Naive thymus-derived CD4-positive, alpha-beta T cell (primary cell): ENCODE measurements at regions of chr9 and their contacts with region 1.

Region 1: DNA sequence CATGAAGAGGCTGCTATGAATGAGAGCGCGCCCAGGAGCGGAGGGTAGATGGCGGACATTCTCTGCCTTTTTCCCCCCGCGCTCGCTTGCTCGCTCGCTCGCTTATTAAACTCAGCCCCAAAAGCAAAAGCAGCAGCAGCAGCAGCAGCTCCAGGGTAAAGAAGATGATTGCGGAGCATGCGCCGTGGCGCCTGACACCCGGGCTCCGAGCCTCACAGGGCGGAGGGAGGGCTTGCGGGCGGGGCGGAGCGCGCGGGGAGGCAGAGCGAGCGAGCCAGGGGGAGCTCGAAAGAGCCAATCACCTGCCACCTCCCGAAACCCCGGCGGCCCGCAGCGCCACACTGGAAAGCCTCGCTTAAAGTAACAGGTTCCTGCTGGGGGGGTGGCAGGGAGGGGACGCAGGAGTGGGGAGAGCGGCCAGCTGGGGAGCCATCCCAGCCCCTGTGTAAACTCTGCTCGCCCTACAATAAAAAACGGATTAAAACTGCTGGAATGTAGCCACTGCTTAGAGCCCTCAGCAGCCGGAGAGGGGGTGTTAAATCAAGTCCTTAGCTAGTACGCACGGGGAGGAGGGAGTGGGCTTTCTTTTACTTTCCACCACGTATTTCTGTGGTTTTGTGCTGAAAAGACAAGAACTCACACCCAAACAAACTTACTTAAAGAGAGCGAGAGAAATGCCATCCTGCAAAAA is at the start of gene MLLT3:
- DNase-seq: peak; percentile 91 to 98 (median 98)
- ATAC-seq: peak; percentile 88
- H3K4me3 ChIP-seq: peak within 1 kb of the TSS; percentile 84
- H3K4me3 Mint-ChIP-seq: peak within 1 kb of the TSS; percentile 92 to 100 (median 98)
- H3K27ac ChIP-seq: peak within 1 kb of the TSS; percentile 89
- H3K27ac Mint-ChIP-seq: peak within 1 kb of the TSS; percentile 89 to 100 (median 99)
- H3K4me1 ChIP-seq: peaks cover 21 to 40% of the 10 kb centered on the region in 2 donors
- H3K4me1 Mint-ChIP-seq: peaks cover 30 to 48% (median 45%) of the 10 kb centered on the region in 7 donors
- H3K27me3 ChIP-seq: no peaks in the 10 kb centered on the region
- H3K27me3 Mint-ChIP-seq: no peaks in the 10 kb centered on the region
- total RNA-seq, gene MLLT3: 40.9 to 85.3 (median 71.3) TPM

Region 2: GRCh38 chr9:19769208-19769607 is 853.3 kb before region 1 on chr9:
- CTCF ChIA-PET with region 1: no interaction called
- POLR2A ChIA-PET with region 1: no interaction called
- intact Hi-C with region 1: no loop called
- DNase-seq: no peak
- ATAC-seq: no peak
- H3K4me3 ChIP-seq: no peak overlapping the region
- H3K4me3 Mint-ChIP-seq: no peak overlapping the region
- H3K27ac ChIP-seq: no peak overlapping the region
- H3K27ac Mint-ChIP-seq: no peak overlapping the region
- H3K4me1 ChIP-seq: no peaks in the 10 kb centered on the region
- H3K4me1 Mint-ChIP-seq: no peaks in the 10 kb centered on the region
- H3K27me3 ChIP-seq: peaks cover 0 to 4% of the 10 kb centered on the region in 2 donors
- H3K27me3 Mint-ChIP-seq: peaks cover 4 to 22% (median 20%) of the 10 kb centered on the region in 5 donors

Region 3: DNA sequence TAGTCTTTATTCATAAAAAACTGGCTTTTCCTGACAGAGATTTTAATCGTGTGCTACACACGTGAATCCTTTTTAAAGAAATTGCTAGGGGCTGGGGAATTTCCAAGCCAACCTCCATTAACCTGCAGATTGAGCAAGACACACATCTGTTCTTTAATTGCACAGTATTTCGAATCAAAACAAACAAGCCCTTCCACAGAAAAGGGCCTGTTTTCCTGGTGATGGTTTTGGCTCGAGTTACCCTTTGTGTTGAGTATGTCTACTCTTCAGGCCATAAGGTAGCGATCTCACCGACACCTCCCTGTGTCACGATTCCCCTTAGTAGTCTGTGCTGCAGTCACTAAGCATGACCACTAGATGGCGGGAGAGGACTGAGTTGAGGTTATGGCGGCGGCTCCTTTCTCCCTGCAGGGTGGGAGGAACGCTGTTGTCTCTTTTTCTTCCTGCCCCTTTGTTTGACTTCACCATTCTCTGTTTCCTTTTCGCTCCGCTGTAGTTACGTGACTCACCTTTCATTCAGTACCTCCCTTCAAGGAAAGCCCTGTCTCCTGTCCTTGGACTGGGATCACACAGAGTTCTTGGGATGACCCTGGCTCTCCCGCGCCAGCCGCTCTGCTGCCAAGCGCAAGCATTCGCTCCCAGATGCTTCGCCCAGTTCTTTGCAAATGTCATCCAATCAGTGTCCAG is 696.5 kb before region 1 on chr9:
- CTCF ChIA-PET with region 1: interaction called, 4 read pairs
- POLR2A ChIA-PET with region 1: no interaction called
- intact Hi-C with region 1: loop called (anchors 1 kb)
- DNase-seq: peak; percentile 54 to 87 (median 82)
- ATAC-seq: peak; percentile 99
- H3K4me3 ChIP-seq: peak overlapping the region; percentile 42
- H3K4me3 Mint-ChIP-seq: peak overlapping the region; percentile 69 to 84 (median 79)
- H3K27ac ChIP-seq: no peak overlapping the region
- H3K27ac Mint-ChIP-seq: peak overlapping the region in 7 of 9 donors; percentile 23 to 53 (median 35)
- H3K4me1 ChIP-seq: peaks cover 0 to 7% of the 10 kb centered on the region in 2 donors
- H3K4me1 Mint-ChIP-seq: peaks cover 0 to 39% (median 8%) of the 10 kb centered on the region in 7 donors
- H3K27me3 ChIP-seq: no peaks in the 10 kb centered on the region
- H3K27me3 Mint-ChIP-seq: peaks cover 0 to 14% (median 3%) of the 10 kb centered on the region in 5 donors

Region 4: DNA sequence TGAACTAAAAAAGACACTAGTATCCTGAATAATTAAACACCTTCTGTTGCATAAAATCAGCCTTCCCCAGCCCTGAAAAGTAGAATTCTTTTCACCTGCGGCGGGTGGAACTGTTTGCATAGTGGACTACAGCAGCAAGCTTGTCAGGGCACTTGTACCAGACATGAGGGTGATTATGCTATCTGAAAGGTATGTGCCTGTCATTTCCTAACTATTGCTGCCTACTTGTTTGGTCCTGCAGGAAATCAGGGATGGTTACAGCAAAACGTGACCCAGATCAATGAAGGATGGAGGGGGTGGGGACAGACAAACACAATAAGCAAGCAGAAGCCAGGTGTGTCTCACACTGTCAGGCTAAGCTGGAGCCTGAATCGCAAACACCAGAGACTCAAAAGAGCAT is 385.8 kb before region 1 on chr9:
- CTCF ChIA-PET with region 1: no interaction called
- POLR2A ChIA-PET with region 1: interaction called, 3 read pairs
- intact Hi-C with region 1: loop called in 1 of 2 experiments (anchors 5 kb)
- DNase-seq: no peak
- ATAC-seq: no peak
- H3K4me3 ChIP-seq: no peak overlapping the region
- H3K4me3 Mint-ChIP-seq: no peak overlapping the region
- H3K27ac ChIP-seq: no peak overlapping the region
- H3K27ac Mint-ChIP-seq: no peak overlapping the region
- H3K4me1 ChIP-seq: peaks cover 0 to 3% of the 10 kb centered on the region in 2 donors
- H3K4me1 Mint-ChIP-seq: peaks cover 9 to 45% (median 37%) of the 10 kb centered on the region in 7 donors
- H3K27me3 ChIP-seq: no peaks in the 10 kb centered on the region
- H3K27me3 Mint-ChIP-seq: no peaks in the 10 kb centered on the region

Region 5: GRCh38 chr9:20373263-20373662 is 249.2 kb before region 1 on chr9:
- CTCF ChIA-PET with region 1: interaction called, 4 read pairs
- POLR2A ChIA-PET with region 1: interaction called, 3 read pairs
- intact Hi-C with region 1: loop called in 1 of 2 experiments (anchors 5 kb)
- DNase-seq: peak in 4 of 9 donors; percentile 27 to 36 (median 30)
- ATAC-seq: peak; percentile 46
- H3K4me3 ChIP-seq: no peak overlapping the region
- H3K4me3 Mint-ChIP-seq: peak overlapping the region in 7 of 10 donors; percentile 30 to 66 (median 46)
- H3K27ac ChIP-seq: peak overlapping the region; percentile 6
- H3K27ac Mint-ChIP-seq: peak overlapping the region; percentile 33 to 84 (median 70)
- H3K4me1 ChIP-seq: peaks cover 0 to 61% of the 10 kb centered on the region in 2 donors
- H3K4me1 Mint-ChIP-seq: peaks cover 37 to 97% (median 92%) of the 10 kb centered on the region in 7 donors
- H3K27me3 ChIP-seq: no peaks in the 10 kb centered on the region
- H3K27me3 Mint-ChIP-seq: no peaks in the 10 kb centered on the region

Region 6: GRCh38 chr9:20640331-20641187 is 18.1 kb after region 1 on chr9:
- CTCF ChIA-PET with region 1: interaction called, 4 read pairs
- POLR2A ChIA-PET with region 1: interaction called, 15 read pairs
- intact Hi-C with region 1: loop called (anchors 1 kb)
- DNase-seq: peak; percentile 44 to 82 (median 76)
- ATAC-seq: peak; percentile 84
- H3K4me3 ChIP-seq: peak overlapping the region; percentile 2
- H3K4me3 Mint-ChIP-seq: peak overlapping the region; percentile 39 to 81 (median 73)
- H3K27ac ChIP-seq: no peak overlapping the region
- H3K27ac Mint-ChIP-seq: peak overlapping the region; percentile 28 to 89 (median 63)
- H3K4me1 ChIP-seq: peaks cover 11 to 15% of the 10 kb centered on the region in 2 donors
- H3K4me1 Mint-ChIP-seq: peaks cover 10 to 26% (median 20%) of the 10 kb centered on the region in 7 donors
- H3K27me3 ChIP-seq: no peaks in the 10 kb centered on the region
- H3K27me3 Mint-ChIP-seq: peaks cover 0 to 22% (median 0%) of the 10 kb centered on the region in 5 donors

Region 7: DNA sequence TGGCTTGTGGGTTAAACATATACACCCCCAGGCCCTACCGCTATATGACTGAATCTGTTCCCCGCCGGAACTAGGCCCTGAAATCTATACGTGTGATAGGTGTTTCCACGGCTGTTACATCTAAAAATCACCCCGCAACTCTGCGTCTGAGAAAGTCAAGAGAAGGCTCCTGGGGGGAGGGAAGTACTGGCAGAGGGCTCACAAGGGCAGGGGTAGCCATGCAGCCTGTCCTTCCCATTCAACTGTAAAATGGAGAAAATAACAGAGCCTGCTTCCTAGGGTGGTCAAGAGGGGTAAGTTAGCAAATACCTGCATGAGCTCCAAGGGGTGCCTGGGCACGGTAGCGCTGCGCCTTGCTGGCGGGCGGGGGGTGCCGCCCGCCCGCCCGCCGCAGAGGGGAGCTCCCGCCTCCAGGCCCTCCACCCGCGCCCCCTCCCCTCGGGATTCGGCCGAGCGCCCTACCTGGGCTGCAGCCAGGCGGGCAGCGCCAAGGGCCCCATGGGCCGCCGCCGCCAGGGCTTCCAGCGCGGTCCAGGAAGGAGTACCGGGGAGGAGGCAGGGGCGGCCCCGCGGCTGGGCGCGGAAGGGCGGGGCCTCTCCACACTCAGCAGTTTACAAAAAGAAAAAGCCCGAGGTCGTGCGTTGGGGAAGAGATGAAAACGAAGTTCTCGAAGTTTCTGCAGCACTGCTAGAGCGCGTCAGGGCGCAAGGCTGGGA is 408.8 kb after region 1 on chr9 and contains the start of gene HACD4:
- CTCF ChIA-PET with region 1: no interaction called
- POLR2A ChIA-PET with region 1: interaction called, 3 read pairs
- intact Hi-C with region 1: loop called (anchors 1 kb)
- DNase-seq: peak; percentile 53 to 76 (median 73)
- ATAC-seq: peak; percentile 87
- H3K4me3 ChIP-seq: peak within 1 kb of the TSS; percentile 62
- H3K4me3 Mint-ChIP-seq: peak within 1 kb of the TSS in 7 of 10 donors; percentile 65 to 86 (median 76)
- H3K27ac ChIP-seq: peak within 1 kb of the TSS; percentile 78
- H3K27ac Mint-ChIP-seq: peak within 1 kb of the TSS in 7 of 9 donors; percentile 71 to 88 (median 81)
- H3K4me1 ChIP-seq: peaks cover 12 to 16% of the 10 kb centered on the region in 2 donors
- H3K4me1 Mint-ChIP-seq: peaks cover 13 to 42% (median 30%) of the 10 kb centered on the region in 7 donors
- H3K27me3 ChIP-seq: no peaks in the 10 kb centered on the region
- H3K27me3 Mint-ChIP-seq: no peaks in the 10 kb centered on the region
- total RNA-seq, gene HACD4: 9.3 to 15.2 (median 13.6) TPM